ENCODE measurements at regions of chr7 and their contacts with region 1.

Region 1: GRCh38 chr7:106153891-106154449 is 41.9 kb upstream of the SYPL1 start:
- DNase-seq: peak; percentile 91
- H3K4me3 ChIP-seq: peak overlapping the region; percentile 58
- H3K27ac ChIP-seq: no peak overlapping the region
- H3K4me1 ChIP-seq: 0 out of 2 replicates have a peak, but pooled peaks cover 2% of the 10 kb centered on the region
- H3K27me3 ChIP-seq: peaks cover 2% of the 10 kb centered on the region

Region 2: DNA sequence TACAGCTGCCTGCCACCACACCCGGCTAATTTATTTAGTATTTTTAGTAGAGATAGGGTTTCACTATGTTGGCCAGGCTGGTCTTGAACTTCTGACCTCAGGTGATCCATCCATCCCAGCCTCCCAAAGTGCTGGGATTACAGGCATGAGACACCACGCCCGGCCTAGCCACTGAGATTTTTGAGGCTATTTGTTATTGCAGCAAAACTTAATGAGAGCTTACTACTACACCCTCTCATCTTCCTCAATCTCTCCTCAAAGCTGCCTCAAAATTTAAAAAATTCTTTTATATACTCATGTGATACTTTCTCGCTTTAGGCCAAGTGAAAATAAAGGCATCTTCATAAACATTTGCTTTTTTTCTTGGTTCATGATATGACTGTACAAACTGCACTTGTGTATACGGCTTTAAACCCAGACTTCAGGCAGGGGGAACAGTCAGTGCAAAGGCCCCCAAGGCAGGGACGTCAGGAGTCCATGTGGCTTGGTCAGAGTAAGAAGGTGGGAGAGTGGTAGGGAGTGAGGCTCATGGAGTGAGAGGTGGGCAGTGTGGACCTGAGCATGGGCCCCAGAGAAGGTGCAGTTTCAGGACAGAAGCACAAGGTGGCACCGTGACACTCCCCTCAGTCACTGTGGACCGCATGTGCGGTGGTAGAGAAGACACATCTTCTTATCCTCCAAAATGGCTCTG is 97.3 kb before region 1 on chr7:
- in situ Hi-C with region 1: loop called (anchors 5 kb)
- DNase-seq: peak; percentile 87
- H3K4me3 ChIP-seq: no peak overlapping the region
- H3K27ac ChIP-seq: no peak overlapping the region
- H3K4me1 ChIP-seq: no peaks in the 10 kb centered on the region
- H3K27me3 ChIP-seq: no peaks in the 10 kb centered on the region; the same call in 1 of the 2 replicates

Measured in GM23248 (cell line).